MCF 10A (cell line): ENCODE measurements at regions of chr2 and their contacts with region 1.

Region 1: DNA sequence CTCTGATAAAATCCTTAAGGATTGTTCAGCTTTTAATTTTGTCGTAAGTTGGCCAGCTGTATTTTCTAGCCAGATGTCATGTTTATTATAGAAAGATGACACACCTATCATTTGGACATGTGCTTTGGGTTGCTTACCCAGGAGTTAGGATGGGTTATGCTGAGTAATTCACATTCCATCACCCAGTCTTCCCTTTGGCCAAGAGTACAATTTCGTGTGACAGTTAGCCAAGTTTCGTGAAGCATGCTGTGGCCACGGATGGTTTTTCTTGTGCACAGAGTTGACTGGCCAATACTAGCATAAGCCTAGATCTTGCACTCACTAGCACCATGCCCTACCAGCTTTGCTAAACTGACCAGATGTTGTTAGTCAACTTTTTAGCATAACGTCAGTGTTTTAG is 5.8 kb downstream of the MAPRE3 start:
- DNase-seq: peak; percentile 26
- H3K4me3 Mint-ChIP-seq: no peak overlapping the region
- H3K27ac Mint-ChIP-seq: no peak overlapping the region
- H3K4me1 Mint-ChIP-seq: peaks cover 19% of the 10 kb centered on the region
- H3K27me3 Mint-ChIP-seq: no peaks in the 10 kb centered on the region
- CTCF ChIP-seq: no peak

Region 2: GRCh38 chr2:26964446-26965130 is 11.6 kb before region 1 on chr2:
- CTCF ChIA-PET with region 1: interaction called, 17 read pairs
- POLR2A ChIA-PET with region 1: interaction called, 6 read pairs
- intact Hi-C with region 1: no loop called
- DNase-seq: no peak
- H3K4me3 Mint-ChIP-seq: no peak overlapping the region
- H3K27ac Mint-ChIP-seq: no peak overlapping the region
- H3K4me1 Mint-ChIP-seq: peaks cover 7% of the 10 kb centered on the region
- H3K27me3 Mint-ChIP-seq: peaks cover 44% of the 10 kb centered on the region
- CTCF ChIP-seq: no peak